Cardiac septum (tissue), 1 donor: ENCODE measurements at regions of chr9 and their contacts with region 1.

Region 1: GRCh38 chr9:85453850-85454249 is 287.9 kb downstream of the AGTPBP1 start:
- DNase-seq: no peak

Region 2: DNA sequence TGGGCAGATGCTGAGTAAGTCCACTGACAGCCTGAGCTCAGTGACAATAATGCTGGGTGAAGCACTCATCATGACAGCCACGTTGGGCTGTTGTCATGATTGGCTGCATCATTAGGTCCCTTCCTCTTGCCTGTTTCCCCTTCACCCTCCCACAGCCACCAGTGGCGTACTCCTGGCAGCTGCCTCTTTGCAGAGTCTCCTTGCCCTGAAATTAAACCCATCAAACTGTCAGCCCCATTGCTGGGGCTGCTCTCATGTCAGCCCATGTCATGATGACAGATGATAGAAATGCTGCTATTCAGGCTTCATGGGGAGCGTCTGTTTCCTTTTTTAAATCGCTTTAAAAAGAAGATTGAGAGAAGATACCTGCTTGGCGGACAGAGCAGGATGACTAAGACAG is 39.5 kb before region 1 on chr9:
- intact Hi-C with region 1: loop called (anchors 5 kb)
- DNase-seq: no peak